CD8-positive, alpha-beta T cell (primary cell): ENCODE measurements at regions of chr22 and their contacts with region 1.

Region 1: DNA sequence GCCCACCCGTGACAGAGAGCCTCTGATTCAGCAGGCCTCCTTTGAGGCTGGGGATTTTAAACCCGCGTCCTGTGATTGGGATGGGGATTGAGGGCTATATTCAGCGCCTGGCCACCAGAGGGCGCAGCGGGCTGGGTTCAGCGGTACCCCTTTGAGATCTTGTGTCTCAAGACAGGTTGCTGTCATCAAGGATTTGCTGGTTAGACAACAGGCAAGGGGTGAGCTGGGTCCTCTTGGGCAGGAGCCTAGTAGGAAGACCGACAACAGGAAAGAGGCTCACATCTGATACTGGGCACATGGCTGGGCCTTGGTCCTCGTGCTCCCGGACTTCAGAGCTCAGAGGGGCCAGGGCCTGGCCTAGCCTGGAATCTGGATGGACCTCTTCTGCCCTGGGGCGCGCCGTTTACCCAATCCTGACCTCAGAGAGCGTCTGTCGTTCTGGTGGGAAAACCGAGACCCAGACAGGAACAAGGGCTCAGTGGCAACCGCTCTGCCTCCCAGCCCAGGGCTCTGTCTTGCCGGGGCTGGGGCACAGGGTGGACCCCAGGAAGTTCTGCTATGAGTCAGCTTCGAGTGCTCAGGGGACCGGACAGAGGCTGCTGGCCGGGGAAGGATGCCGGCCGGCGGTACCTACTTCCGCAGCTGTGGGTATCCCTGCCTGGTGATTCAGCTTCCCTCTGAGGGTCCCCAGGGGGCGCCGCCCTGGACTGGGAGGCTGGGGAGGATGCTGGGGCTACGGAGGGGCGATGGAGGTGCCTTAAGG is 929 bp upstream of the SLC35E4 start:
- DNase-seq: peak; percentile 75 to 95 (median 90)
- ATAC-seq: peak; percentile 64
- H3K4me3 ChIP-seq: peak overlapping the region; percentile 60 to 87
- H3K4me3 Mint-ChIP-seq: peak overlapping the region; percentile 81
- H3K27ac ChIP-seq: peak overlapping the region; percentile 32 to 89
- H3K27ac Mint-ChIP-seq: peak overlapping the region; percentile 91
- H3K4me1 ChIP-seq: peaks cover 31% of the 10 kb centered on the region
- H3K4me1 Mint-ChIP-seq: peaks cover 22% of the 10 kb centered on the region
- H3K27me3 ChIP-seq: no peaks in the 10 kb centered on the region
- H3K27me3 Mint-ChIP-seq: no peaks in the 10 kb centered on the region
- CTCF ChIP-seq: peak; percentile 80

Region 2: DNA sequence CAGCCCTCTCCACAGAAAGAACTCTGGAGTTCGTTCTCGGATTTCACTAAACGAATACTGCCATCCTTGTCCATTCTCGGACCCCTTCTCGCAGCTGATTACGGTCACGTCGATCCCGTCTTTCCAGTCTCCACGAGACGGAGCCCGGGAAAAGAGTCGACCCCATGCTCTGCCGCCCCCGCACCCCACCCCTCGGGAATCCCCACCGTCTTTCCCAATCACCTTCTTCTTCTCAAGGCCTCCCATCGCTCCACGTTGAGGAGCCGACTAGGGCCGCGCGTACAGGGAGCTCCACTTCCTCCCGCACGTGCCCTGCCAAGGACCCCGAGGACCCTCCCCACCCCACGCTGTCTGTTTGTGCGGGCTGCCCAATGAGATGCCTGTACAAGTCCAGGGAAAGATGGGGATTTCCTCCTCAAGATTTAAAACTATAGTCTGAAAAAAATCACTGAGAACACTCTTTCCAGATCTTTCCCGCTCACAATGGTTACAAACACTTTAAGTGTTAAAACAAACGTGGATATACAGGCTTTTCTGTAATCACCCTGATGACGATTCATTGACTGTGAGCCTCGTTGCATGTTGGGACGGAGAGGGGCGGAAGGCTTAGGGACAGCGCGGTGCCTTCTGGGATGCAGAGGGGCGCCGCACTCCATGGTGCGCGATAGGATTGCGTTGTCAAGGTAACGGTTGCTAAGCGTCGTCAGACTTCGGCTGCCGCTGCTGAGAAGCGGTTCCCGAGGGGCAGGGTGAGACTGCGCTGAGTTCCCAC is 42.9 kb before region 1 on chr22 and contains the start of gene PES1:
- CTCF ChIA-PET with region 1: interaction called, 6 read pairs
- POLR2A ChIA-PET with region 1: no interaction called
- intact Hi-C with region 1: loop called (anchors 1 kb)
- DNase-seq: peak; percentile 90 to 99 (median 95)
- ATAC-seq: peak; percentile 96
- H3K4me3 ChIP-seq: peak within 1 kb of the TSS; percentile 79 to 80
- H3K4me3 Mint-ChIP-seq: no peak within 1 kb of the TSS
- H3K27ac ChIP-seq: peak within 1 kb of the TSS; percentile 89 to 97
- H3K27ac Mint-ChIP-seq: no peak within 1 kb of the TSS
- H3K4me1 ChIP-seq: peaks cover 15% of the 10 kb centered on the region
- H3K4me1 Mint-ChIP-seq: no peaks in the 10 kb centered on the region
- H3K27me3 ChIP-seq: no peaks in the 10 kb centered on the region
- H3K27me3 Mint-ChIP-seq: peaks cover 13% of the 10 kb centered on the region
- CTCF ChIP-seq: no peak
- total RNA-seq, gene PES1: 39.7 to 47.0 TPM

Region 3: DNA sequence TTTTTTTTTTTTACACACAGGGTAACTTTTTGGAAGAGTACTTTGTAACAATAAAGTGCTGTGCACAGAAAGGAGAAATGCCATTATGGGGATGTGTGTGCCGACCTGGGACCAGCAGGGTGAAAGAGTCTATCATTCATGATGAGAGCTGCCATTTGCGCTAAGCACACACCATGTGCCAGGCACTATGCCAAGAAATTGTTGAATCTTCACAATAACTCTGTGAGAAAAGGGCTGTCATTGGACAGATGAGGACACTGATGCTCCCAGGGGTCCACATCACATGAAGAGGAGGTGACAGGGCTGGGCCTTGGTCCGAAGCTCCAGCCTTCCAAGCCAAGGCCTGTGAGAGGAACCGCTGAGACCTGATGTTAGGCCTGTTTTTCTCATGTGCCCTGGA is 27.4 kb after region 1 on chr22:
- CTCF ChIA-PET with region 1: interaction called, 22 read pairs
- POLR2A ChIA-PET with region 1: interaction called, 12 read pairs
- intact Hi-C with region 1: loop called (anchors 1 kb)
- DNase-seq: no peak
- ATAC-seq: no peak
- H3K4me3 ChIP-seq: no peak overlapping the region
- H3K4me3 Mint-ChIP-seq: no peak overlapping the region
- H3K27ac ChIP-seq: no peak overlapping the region
- H3K27ac Mint-ChIP-seq: no peak overlapping the region
- H3K4me1 ChIP-seq: peaks cover 11% of the 10 kb centered on the region
- H3K4me1 Mint-ChIP-seq: peaks cover 13% of the 10 kb centered on the region
- H3K27me3 ChIP-seq: no peaks in the 10 kb centered on the region
- H3K27me3 Mint-ChIP-seq: no peaks in the 10 kb centered on the region
- CTCF ChIP-seq: no peak

Region 4: GRCh38 chr22:30754971-30755756 is 120.5 kb after region 1 on chr22:
- CTCF ChIA-PET with region 1: interaction called, 72 read pairs
- POLR2A ChIA-PET with region 1: interaction called, 7 read pairs
- intact Hi-C with region 1: loop called in 1 of 2 experiments (anchors 1 kb)
- DNase-seq: peak in 8 of 9 experiments; percentile 15 to 68 (median 48)
- ATAC-seq: peak; percentile 66
- H3K4me3 ChIP-seq: no peak overlapping the region
- H3K4me3 Mint-ChIP-seq: no peak overlapping the region
- H3K27ac ChIP-seq: no peak overlapping the region
- H3K27ac Mint-ChIP-seq: no peak overlapping the region
- H3K4me1 ChIP-seq: no peaks in the 10 kb centered on the region
- H3K4me1 Mint-ChIP-seq: no peaks in the 10 kb centered on the region
- H3K27me3 ChIP-seq: no peaks in the 10 kb centered on the region
- H3K27me3 Mint-ChIP-seq: no peaks in the 10 kb centered on the region
- CTCF ChIP-seq: peak; percentile 28

Region 5: DNA sequence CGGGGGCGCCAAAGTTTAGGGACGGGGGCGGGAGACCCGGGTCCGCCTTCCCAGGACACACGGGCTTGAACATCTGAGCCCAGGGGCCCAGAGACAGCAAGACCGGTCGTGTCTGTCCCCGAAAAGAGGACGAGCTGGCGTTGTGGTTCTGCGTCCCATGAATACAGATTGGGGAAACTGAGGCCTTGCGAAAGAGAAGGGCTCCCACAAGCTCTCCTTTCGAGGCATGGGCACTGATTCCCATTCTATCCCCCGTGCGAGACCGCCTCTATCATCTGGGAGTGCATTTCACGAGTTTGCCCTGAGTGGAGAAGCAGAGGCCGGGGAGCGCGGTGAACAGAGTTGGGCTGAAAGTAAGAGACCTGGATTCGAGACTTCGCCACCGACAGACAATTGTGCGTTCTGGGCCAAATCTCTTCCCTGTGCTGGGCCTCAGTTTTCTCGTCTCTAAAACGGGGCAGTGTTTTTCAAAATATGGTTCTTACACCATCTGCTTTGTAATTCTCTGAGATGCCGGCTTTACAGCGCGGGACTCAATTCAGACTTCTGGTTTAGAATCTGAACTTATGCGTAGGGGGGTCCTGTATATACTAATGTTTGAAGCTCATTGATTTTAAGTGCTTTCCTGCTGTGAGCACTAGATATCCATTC is 525.8 kb after region 1 on chr22:
- CTCF ChIA-PET with region 1: no interaction called
- POLR2A ChIA-PET with region 1: interaction called, 3 read pairs
- intact Hi-C with region 1: loop called in 1 of 2 experiments (anchors 2 kb)
- DNase-seq: peak in 6 of 9 experiments; percentile 11 to 55 (median 28)
- ATAC-seq: peak; percentile 34
- H3K4me3 ChIP-seq: peak overlapping the region; percentile 78 to 86
- H3K4me3 Mint-ChIP-seq: peak overlapping the region; percentile 100
- H3K27ac ChIP-seq: peak overlapping the region; percentile 72 to 90
- H3K27ac Mint-ChIP-seq: peak overlapping the region; percentile 98
- H3K4me1 ChIP-seq: peaks cover 26% of the 10 kb centered on the region
- H3K4me1 Mint-ChIP-seq: peaks cover 38% of the 10 kb centered on the region
- H3K27me3 ChIP-seq: no peaks in the 10 kb centered on the region
- H3K27me3 Mint-ChIP-seq: no peaks in the 10 kb centered on the region
- CTCF ChIP-seq: no peak